Right ventricle myocardium superior (tissue), 1 donor: ENCODE measurements at regions of chr1 and their contacts with region 1.

Region 1: GRCh38 chr1:225318706-225319575 is 108.9 kb downstream of the LBR start:
- DNase-seq: no peak
- ATAC-seq: peak; percentile 81

Region 2: DNA sequence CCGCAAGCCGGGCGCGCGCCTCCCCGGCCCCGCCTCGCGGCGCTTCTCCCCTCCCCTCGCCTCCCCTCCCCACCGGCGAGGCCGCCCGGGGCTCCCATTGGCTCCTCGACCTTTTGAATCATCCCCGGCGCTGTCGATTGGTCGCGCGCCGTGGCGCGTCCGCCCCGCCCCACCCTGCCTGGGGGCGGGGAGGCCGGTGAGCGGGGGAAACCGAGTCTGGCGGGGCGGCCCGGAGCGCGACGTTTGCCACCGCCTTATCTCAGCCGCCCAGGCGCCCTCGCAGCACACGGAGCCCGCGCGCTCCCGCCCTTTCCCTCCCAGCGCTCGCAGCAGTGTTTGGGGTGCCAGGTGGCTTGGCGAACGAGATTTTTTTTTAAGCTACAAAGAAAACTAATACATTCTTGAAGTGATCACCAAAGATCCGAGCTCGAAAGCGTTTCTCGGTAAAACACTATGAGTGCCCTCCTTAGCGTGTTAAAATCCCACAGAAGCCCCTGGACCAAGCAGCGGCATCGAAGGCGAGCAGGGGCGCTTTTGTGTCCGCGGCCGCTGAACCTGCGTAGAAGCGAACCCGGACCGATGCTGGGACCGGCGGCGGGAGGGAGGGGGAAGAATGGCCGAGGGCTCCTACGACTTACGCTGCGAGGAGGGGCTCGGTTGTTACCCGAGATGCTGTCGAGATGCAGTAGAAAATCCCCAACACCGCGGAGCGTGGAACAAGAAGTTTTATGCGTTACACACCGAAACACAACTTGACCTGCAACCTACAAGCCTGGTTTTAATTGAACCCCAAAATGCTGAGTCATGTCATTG is 109.3 kb after region 1 on chr1:
- intact Hi-C with region 1: no loop called
- DNase-seq: peak; percentile 94
- ATAC-seq: peak; percentile 96

Region 3: DNA sequence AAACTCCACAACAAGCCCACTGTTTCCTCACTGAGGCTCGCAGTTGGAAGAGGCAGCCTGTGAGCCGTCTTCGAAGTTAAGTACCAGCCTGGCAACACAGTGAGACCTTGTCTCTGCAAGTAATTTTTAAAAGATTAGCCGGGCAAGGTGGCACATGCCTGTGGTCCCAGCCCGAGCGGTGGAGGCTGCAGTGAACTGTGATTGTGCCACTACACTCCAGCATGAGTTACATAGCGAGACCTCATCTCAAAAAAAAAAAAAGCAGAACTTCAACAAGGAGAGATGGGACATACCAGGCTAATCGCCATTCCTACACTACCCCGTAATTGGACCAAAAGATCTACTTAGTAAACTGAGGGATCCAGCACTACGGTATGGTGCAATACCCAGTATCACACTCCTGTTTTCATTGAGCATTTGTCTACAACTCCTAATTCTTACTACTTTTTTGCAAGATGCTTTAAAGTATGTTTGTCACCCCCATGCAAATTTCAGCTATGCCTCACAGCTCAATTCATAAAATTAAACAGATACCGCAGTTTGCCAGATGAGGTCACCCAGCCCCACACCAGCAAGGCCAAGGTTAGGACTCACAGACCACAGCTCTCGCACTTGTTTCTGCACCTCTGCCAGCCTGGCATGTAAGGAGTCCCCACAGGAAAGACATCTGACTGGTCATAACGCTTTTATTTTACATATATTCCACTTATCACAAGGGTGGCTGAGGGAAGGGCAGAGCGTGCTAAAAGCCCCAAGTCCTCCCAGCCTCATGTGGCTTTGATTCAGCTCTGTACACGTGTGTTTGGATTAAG is 659.2 kb after region 1 on chr1:
- intact Hi-C with region 1: loop called (anchors 5 kb)
- DNase-seq: no peak
- ATAC-seq: no peak